ENCODE measurements at regions of chr17 and their contacts with region 1.

Region 1: DNA sequence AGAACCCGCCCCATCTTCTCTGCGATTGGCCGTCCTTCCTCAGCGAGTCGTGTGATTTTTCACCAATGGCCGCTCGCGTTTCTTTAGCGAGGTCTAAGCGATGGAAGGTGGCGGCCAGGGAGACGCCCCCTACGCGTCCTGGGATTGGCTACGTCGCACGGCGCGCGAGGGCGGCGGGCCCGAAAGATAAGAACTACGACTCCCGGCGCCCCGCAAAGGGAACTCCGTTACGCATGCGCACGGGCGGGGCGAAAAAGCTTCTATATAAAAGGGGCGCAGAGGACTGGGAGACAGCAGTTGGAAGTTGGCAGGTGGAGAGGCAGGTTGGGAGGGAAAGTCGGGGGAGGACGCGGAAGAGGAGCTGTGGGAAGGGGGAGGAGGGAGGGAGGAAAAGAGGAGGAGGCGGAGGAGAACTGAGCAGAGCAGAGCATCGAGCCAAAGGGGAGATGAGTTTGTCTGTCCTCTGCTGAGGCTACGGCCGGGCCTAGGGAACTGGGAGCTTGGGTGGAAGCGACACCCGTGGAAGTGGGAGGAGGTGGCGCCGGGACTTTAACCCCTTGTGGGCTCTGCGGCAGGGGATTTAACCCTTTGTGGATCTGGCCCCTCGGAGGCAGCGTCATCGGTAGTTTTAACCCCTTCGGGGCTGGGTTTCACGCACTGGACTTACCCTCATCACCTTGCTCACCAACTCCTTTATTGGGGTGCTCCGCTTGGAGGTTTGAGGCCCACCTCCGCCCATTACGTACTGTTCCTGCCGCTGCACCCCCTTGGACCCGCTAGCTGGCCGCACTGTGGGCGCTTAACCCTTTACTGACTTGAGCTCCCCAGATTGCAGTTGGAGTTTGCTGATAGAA is at the start of gene HEXIM1:
- DNase-seq: peak; percentile 100
- H3K4me3 Mint-ChIP-seq: peak within 1 kb of the TSS; percentile 98
- H3K27ac Mint-ChIP-seq: peak within 1 kb of the TSS; percentile 100
- H3K4me1 Mint-ChIP-seq: peaks cover 39% of the 10 kb centered on the region
- H3K27me3 Mint-ChIP-seq: peaks cover 14% of the 10 kb centered on the region
- CTCF ChIP-seq: no peak
- total RNA-seq, gene HEXIM1: 57.2 and 64.7 TPM in 2 replicates

Region 2: DNA sequence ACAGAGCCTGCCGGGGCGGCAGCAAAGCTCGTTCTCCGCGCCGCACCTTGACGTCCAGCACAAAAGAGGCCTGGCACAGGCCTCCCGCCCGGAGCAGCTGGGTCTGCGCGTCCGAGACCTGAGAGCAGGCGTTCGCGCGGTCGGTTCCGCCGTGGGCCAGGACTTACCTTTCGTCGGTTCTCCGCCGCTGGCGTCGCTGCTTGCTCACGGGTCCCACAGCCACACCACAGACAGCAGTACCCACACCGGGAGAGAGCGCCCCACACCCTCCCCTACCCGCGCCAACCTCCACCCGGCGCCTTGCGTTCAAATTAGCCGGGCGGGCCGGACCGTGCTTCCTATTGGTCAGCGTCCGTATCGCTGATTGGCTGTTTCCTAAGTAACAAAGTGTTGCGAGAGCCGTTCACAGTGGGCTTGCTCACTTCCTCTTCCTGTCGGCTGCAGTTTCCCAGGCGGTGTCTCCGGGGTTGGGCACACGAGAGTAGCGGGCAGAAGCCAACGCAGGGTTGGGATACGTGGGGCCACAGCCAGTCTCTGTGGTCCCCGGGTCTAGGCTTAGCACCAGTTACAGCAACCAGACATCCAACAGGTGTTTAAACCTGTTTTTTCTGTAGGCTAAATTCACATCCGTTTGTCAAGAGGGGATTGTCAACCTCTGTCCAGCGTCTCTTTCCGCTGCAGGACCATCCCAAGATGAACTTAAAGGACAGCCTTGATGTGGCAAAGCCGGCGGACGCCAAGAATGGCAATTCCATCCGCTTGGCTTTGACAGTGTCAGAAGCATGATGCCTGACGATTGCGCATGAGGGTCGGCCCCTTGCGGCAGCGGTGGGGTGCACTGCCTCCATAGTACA is 200.7 kb before region 1 on chr17 and contains the start of gene KIF18B:
- CTCF ChIA-PET with region 1: no interaction called
- intact Hi-C with region 1: no loop called
- DNase-seq: peak; percentile 97
- H3K4me3 Mint-ChIP-seq: peak within 1 kb of the TSS; percentile 86
- H3K27ac Mint-ChIP-seq: peak within 1 kb of the TSS; percentile 89
- H3K4me1 Mint-ChIP-seq: peaks cover 14% of the 10 kb centered on the region
- H3K27me3 Mint-ChIP-seq: peaks cover 5% of the 10 kb centered on the region
- CTCF ChIP-seq: no peak
- total RNA-seq, gene KIF18B: 72.8 and 84.6 TPM in 2 replicates

Region 3: DNA sequence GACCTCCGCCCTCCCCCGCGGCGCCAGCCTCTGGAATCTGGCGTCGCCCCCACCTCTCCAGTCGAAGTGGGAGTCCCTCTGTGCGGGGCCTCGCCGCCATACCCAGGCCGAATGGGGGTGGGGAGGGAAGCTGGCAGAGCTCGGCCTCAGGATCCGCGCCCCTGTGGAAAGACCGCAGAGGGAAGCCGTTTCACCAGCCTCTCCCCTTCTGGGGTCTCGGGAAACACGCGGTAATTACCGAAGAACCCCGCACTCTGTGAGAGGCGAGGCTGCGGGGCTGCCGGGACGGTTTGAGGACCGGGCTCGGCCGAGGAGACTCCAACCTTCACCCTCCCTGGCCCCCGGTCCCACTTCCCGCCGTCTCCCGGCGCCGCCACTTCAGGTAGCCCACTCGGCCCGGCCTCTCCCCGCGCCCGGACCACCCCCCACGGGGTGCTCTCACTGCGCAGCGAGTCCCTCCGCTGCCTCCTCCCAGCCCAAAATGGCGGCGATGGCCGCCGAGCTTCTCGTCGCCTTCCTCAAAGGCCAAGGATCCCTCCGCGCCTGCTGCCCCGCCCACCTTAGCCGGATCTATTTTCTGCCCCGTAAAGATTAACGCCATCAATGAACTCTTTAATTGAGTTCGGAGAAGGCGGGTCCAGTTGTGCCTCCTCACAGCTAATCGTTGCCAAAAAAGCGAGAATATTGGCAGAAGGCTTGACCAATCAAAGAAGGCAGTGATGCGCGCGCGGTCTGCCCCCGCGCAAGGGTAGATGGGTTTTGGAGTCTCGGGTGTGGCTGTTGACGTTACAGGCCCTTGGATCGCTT is 12.8 kb after region 1 on chr17:
- CTCF ChIA-PET with region 1: interaction called, 108 read pairs
- intact Hi-C with region 1: no loop called
- DNase-seq: peak; percentile 100
- H3K4me3 Mint-ChIP-seq: peak overlapping the region; percentile 91
- H3K27ac Mint-ChIP-seq: peak overlapping the region; percentile 97
- H3K4me1 Mint-ChIP-seq: peaks cover 46% of the 10 kb centered on the region
- H3K27me3 Mint-ChIP-seq: no peaks in the 10 kb centered on the region
- CTCF ChIP-seq: no peak

Region 4: GRCh38 chr17:45190503-45191255 is 42.3 kb after region 1 on chr17:
- CTCF ChIA-PET with region 1: interaction called, 253 read pairs
- intact Hi-C with region 1: loop called (anchors 1 kb)
- DNase-seq: peak; percentile 28
- H3K4me3 Mint-ChIP-seq: no peak overlapping the region
- H3K27ac Mint-ChIP-seq: peak overlapping the region; percentile 73
- H3K4me1 Mint-ChIP-seq: peaks cover 53% of the 10 kb centered on the region
- H3K27me3 Mint-ChIP-seq: no peaks in the 10 kb centered on the region
- CTCF ChIP-seq: no peak

Region 5: GRCh38 chr17:45218895-45219661 is 70.7 kb after region 1 on chr17:
- CTCF ChIA-PET with region 1: interaction called, 19 read pairs
- intact Hi-C with region 1: no loop called
- DNase-seq: peak; percentile 95
- H3K4me3 Mint-ChIP-seq: no peak overlapping the region
- H3K27ac Mint-ChIP-seq: no peak overlapping the region
- H3K4me1 Mint-ChIP-seq: no peaks in the 10 kb centered on the region
- H3K27me3 Mint-ChIP-seq: peaks cover 43% of the 10 kb centered on the region
- CTCF ChIP-seq: peak; percentile 98

Region 6: GRCh38 chr17:45235416-45236281 is 87.2 kb after region 1 on chr17:
- CTCF ChIA-PET with region 1: interaction called, 24 read pairs
- intact Hi-C with region 1: no loop called
- DNase-seq: peak; percentile 86
- H3K4me3 Mint-ChIP-seq: no peak overlapping the region
- H3K27ac Mint-ChIP-seq: no peak overlapping the region
- H3K4me1 Mint-ChIP-seq: peaks cover 13% of the 10 kb centered on the region
- H3K27me3 Mint-ChIP-seq: peaks cover 56% of the 10 kb centered on the region
- CTCF ChIP-seq: peak; percentile 92

Region 7: GRCh38 chr17:45270828-45271418 is 122.5 kb after region 1 on chr17:
- CTCF ChIA-PET with region 1: no interaction called
- intact Hi-C with region 1: no loop called
- DNase-seq: peak; percentile 49
- H3K4me3 Mint-ChIP-seq: no peak overlapping the region
- H3K27ac Mint-ChIP-seq: no peak overlapping the region
- H3K4me1 Mint-ChIP-seq: peaks cover 3% of the 10 kb centered on the region
- H3K27me3 Mint-ChIP-seq: no peaks in the 10 kb centered on the region
- CTCF ChIP-seq: peak; percentile 64

Measured in Calu3 (cell line).